Psoas muscle (tissue), 8 donors: ENCODE measurements at regions of chr13 and their contacts with region 1.

Region 1: GRCh38 chr13:44870456-44870929 is 118.8 kb downstream of the NUFIP1 start:
- DNase-seq: peak; percentile 79 to 95
- ATAC-seq: peak; percentile 91 to 97 (median 95)
- H3K4me3 ChIP-seq: no peak overlapping the region
- H3K27ac ChIP-seq: peak overlapping the region; percentile 84
- H3K4me1 ChIP-seq: peaks cover 23% of the 10 kb centered on the region
- H3K27me3 ChIP-seq: no peaks in the 10 kb centered on the region
- CTCF ChIP-seq: no peak

Region 2: DNA sequence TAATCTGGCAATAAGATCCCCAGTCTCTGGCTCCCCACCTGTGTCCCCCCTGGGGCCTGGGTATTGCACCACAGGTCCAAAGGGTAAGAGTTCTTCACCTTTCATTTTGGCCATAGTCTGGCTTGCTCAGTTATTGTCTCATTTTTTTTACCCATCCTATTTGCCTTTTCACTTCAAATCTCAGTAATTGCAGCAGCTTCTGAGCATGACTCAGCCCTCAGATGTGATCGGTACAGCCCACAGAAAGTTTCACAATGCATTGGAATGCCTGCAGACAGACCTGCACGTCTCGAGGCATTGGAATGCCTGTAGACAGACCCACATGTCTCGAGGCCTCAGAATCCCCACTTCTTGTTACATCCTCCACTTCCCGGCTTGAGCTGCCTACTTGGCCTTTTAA is 54.9 kb before region 1 on chr13:
- intact Hi-C with region 1: no loop called
- DNase-seq: no peak
- ATAC-seq: peak in 2 of 4 donors; percentile 54 to 56
- H3K4me3 ChIP-seq: no peak overlapping the region
- H3K27ac ChIP-seq: no peak overlapping the region
- H3K4me1 ChIP-seq: peaks cover under 1% of the 10 kb centered on the region
- H3K27me3 ChIP-seq: no peaks in the 10 kb centered on the region
- CTCF ChIP-seq: no peak

Region 3: DNA sequence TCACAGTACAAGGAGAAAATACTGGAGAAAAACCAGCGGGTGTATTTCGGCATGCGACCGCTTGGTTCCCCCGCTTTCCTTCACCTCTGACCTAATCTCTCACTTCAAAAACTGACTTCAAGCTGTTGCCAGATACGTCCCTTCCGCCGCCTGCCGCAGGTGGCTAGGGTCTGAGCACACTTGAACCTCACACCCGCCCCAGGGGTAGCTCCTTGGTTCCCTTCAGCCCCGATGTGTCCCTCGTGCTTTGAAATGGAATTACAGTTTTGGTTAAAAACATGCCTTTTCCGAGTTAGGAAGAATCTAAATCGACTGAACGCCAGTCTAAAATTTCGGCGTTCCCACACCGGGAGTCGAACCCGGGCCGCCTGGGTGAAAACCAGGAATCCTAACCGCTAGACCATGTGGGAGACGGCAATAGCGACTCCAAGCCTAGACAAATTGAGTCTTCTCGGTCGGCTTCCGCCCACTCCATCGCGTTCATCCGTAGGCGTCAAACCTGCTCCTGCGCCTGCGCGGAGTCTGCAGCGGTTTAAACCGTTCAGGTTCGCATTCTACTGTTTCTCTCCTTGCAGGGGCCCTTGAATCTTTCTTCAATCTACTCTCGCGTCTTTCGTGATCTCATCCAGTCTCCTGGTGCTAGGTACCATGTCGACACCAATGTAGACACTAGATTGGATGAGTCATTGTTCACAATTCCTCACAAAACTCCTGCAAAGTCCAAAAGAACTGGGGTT is 47.3 kb after region 1 on chr13:
- intact Hi-C with region 1: loop called in 1 of 2 experiments (anchors 5 kb)
- DNase-seq: peak; percentile 93 to 97
- ATAC-seq: peak; percentile 69 to 79 (median 72)
- H3K4me3 ChIP-seq: peak overlapping the region; percentile 70
- H3K27ac ChIP-seq: peak overlapping the region; percentile 93
- H3K4me1 ChIP-seq: peaks cover 26% of the 10 kb centered on the region
- H3K27me3 ChIP-seq: no peaks in the 10 kb centered on the region
- CTCF ChIP-seq: peak; percentile 41